PC-3 (cell line): ENCODE measurements at regions of chr2 and their contacts with region 1.

Region 1: DNA sequence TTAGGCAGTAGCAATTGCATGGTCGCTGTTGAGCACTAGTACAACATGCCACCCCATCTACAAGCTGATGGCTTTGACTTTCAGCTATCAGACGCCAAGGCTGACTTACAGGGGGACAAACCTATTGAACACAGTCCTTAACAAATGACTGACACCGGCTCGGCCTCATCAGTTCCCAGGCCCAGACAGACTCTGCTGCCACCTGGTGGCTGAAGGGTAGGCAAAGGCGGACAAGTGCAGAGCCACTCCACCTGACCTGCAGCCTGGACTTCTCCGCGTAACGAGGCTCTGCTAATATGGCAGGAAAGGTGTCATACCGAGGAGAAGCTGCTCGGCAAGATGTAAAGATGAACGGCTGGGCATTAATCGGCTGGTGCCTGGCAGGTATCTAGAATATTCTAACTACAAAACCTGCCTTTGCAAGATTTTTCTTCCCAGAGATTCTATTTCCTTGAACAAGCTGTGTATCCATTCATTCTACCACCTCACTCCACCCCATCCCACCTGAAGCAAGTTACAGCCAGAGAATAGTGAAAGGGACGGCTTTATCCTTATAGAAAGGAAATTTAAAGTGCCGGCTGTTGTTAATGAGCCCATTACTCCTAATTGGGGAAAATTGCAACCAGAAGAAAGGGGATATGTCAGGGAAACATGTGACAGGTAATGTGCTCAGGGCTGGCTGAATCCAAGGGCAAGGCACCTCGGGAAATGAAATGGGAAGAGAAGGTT is 67.4 kb downstream of the STEAP3 start:
- DNase-seq: peak; percentile 87
- ATAC-seq: peak; percentile 96
- H3K4me3 ChIP-seq: no peak overlapping the region
- H3K27ac ChIP-seq: no peak overlapping the region
- H3K4me1 ChIP-seq: peaks cover 8% of the 10 kb centered on the region; the same call in 1 of the 2 replicates
- H3K27me3 ChIP-seq: no peaks in the 10 kb centered on the region
- CTCF ChIP-seq: peak; percentile 94

Region 2: GRCh38 chr2:118882709-118883210 is 408.3 kb before region 1 on chr2:
- CTCF ChIA-PET with region 1: interaction called, 5 read pairs
- POLR2A ChIA-PET with region 1: no interaction called
- intact Hi-C with region 1: loop called (anchors 1 kb)
- DNase-seq: peak; percentile 82
- ATAC-seq: peak; percentile 75
- H3K4me3 ChIP-seq: peak overlapping the region; percentile 76
- H3K27ac ChIP-seq: no peak overlapping the region
- H3K4me1 ChIP-seq: peaks cover 16% of the 10 kb centered on the region
- H3K27me3 ChIP-seq: no peaks in the 10 kb centered on the region
- CTCF ChIP-seq: peak; percentile 95

Region 3: GRCh38 chr2:119011162-119011909 is 279.7 kb before region 1 on chr2:
- CTCF ChIA-PET with region 1: no interaction called
- POLR2A ChIA-PET with region 1: no interaction called
- intact Hi-C with region 1: loop called (anchors 1 kb)
- DNase-seq: peak; percentile 70
- ATAC-seq: peak; percentile 94
- H3K4me3 ChIP-seq: peak overlapping the region; percentile 40
- H3K27ac ChIP-seq: no peak overlapping the region
- H3K4me1 ChIP-seq: no peaks in the 10 kb centered on the region
- H3K27me3 ChIP-seq: peaks cover 44% of the 10 kb centered on the region
- CTCF ChIP-seq: peak; percentile 74

Region 4: DNA sequence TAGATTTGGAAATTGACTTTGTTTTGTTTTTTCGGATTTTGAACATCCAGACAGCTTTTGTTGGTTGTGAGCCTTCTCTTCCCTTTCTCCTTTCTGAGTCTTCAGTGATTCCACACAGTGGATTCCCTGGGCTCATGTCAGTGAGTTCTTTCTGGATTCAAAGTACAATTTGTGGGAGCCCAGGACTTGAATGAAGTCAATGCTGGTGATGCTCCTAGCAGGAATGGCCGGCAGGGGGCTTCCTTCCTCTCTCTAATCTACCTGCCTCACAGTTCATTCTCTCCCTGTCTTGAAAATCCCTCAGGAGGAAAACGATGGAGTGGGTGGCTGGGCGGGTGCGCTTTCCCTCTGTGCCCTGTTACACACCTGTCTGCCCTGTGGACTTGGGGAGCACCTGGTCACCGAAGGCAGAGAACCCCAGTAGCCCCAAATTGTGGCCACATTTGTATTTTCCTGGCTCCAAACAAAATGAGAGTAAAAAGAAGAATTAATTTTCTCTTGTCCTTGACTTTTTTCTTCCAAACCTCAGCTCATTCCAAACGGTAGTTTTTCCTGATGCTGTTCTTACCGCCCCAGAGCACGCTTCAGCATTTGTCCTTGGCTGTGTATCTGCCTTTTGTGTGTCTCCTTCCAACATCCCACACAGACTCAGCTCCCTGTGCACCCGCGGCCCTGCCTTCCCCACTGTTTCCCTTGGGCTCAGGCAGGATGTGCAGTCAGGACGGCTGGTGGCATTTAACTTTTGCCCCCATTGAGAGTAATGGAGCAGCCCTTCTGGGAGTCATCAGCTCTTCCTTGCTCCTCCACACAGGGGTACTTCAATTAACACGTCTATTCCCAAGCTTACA is 262.5 kb before region 1 on chr2:
- CTCF ChIA-PET with region 1: no interaction called
- POLR2A ChIA-PET with region 1: no interaction called
- intact Hi-C with region 1: loop called (anchors 1 kb)
- DNase-seq: peak; percentile 63
- ATAC-seq: peak; percentile 74
- H3K4me3 ChIP-seq: no peak overlapping the region
- H3K27ac ChIP-seq: no peak overlapping the region
- H3K4me1 ChIP-seq: no peaks in the 10 kb centered on the region
- H3K27me3 ChIP-seq: peaks cover 34% of the 10 kb centered on the region
- CTCF ChIP-seq: peak; percentile 82

Region 5: GRCh38 chr2:119160361-119160990 is 130.5 kb before region 1 on chr2:
- CTCF ChIA-PET with region 1: no interaction called
- POLR2A ChIA-PET with region 1: no interaction called
- intact Hi-C with region 1: loop called (anchors 10 kb)
- DNase-seq: no peak
- ATAC-seq: no peak
- H3K4me3 ChIP-seq: no peak overlapping the region
- H3K27ac ChIP-seq: no peak overlapping the region
- H3K4me1 ChIP-seq: no peaks in the 10 kb centered on the region
- H3K27me3 ChIP-seq: peaks cover 25% of the 10 kb centered on the region
- CTCF ChIP-seq: no peak

Region 6: DNA sequence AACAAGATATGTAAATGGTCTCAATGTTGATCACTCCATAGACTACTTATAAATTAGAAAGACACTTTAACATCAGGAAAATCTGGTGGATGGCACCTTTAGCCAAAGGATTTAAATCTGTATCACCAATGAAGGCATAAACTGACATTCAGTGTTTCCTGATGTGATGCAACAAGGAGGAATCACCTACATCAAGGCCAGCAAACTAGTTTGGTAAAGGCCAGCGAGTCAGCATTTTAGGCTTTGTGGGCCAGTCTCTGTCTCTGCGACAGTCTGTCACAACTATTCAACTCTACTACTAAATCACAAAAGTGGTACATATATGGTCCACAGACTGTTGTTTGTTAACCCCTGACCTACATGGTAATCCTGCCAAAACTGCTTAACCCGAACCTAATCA is 42.3 kb after region 1 on chr2:
- CTCF ChIA-PET with region 1: no interaction called
- POLR2A ChIA-PET with region 1: no interaction called
- intact Hi-C with region 1: no loop called
- DNase-seq: peak; percentile 12
- ATAC-seq: no peak
- H3K4me3 ChIP-seq: no peak overlapping the region
- H3K27ac ChIP-seq: no peak overlapping the region
- H3K4me1 ChIP-seq: no peaks in the 10 kb centered on the region
- H3K27me3 ChIP-seq: no peaks in the 10 kb centered on the region
- CTCF ChIP-seq: no peak

Region 7: DNA sequence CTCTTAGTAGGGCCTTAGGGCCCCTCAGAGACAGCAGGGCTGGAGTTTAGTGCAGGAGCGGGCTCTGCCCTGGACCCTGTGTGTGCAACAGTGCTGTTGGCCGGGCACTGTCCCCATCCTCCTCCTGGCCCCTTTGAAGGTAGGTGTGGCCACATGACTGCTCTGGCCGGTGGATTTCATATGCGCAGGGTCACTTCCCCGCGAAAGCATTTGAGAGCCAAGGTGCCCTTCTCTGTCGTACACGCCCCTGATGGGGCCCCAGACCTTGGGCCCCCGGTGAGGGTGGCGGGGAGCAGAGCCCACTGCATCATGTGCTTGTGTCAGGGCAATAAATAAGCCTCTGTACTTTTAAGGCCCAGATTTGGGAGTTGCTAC is 403.4 kb after region 1 on chr2:
- CTCF ChIA-PET with region 1: no interaction called
- POLR2A ChIA-PET with region 1: no interaction called
- intact Hi-C with region 1: no loop called
- DNase-seq: no peak
- ATAC-seq: no peak
- H3K4me3 ChIP-seq: no peak overlapping the region
- H3K27ac ChIP-seq: no peak overlapping the region
- H3K4me1 ChIP-seq: no peaks in the 10 kb centered on the region
- H3K27me3 ChIP-seq: no peaks in the 10 kb centered on the region
- CTCF ChIP-seq: no peak